ENCODE measurements at regions of chr10 and their contacts with region 1.

Region 1: GRCh38 chr10:59124187-59124586 is 52.3 kb upstream of the PHYHIPL start:
- DNase-seq: no peak
- ATAC-seq: no peak
- H3K4me3 ChIP-seq: no peak overlapping the region
- H3K27ac ChIP-seq: no peak overlapping the region
- H3K4me1 ChIP-seq: no peaks in the 10 kb centered on the region
- H3K27me3 ChIP-seq: no peaks in the 10 kb centered on the region
- CTCF ChIP-seq: no peak

Region 2: DNA sequence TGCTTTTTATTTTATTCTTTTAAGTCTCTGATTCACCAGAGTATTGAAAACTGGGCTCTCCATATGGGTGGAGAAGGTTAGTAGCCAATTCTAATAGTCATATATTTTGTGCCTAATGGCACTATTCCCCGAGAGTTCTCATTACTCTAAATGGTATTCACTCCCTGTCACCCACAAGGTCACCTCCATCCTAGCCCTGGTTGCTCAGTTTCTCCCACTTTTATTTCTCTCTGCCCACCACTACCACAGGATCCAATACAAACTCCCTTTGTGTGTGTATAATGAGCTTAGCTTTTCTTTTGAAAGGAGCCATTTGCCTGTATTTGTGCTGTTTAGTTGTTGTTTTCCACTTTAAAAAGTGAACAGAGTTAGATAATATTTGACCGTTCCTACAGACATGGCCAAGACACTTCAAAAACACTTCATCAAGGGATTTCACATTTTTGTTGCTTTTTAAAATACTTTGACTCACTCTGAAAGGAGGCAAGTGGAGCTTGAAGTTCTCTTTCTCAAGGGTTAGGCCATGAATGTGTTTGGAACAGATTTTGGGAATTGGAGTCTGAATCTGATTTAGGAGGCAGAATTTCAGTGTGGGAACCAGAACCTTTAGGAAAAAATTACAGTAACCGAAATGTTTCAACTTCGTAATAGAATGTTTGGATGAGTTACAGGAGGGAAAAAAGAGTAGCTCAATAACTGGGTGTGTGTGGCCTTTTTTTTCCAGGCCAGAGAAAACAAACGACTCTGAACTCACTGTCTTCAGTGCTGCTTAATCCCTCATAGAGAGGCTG is 290.2 kb before region 1 on chr10:
- CTCF ChIA-PET with region 1: no interaction called
- POLR2A ChIA-PET with region 1: no interaction called
- in situ Hi-C with region 1: no loop called
- intact Hi-C with region 1: no loop called
- DNase-seq: no peak
- ATAC-seq: no peak
- H3K4me3 ChIP-seq: no peak overlapping the region
- H3K27ac ChIP-seq: no peak overlapping the region
- H3K4me1 ChIP-seq: no peaks in the 10 kb centered on the region
- H3K27me3 ChIP-seq: no peaks in the 10 kb centered on the region
- CTCF ChIP-seq: no peak

Region 3: DNA sequence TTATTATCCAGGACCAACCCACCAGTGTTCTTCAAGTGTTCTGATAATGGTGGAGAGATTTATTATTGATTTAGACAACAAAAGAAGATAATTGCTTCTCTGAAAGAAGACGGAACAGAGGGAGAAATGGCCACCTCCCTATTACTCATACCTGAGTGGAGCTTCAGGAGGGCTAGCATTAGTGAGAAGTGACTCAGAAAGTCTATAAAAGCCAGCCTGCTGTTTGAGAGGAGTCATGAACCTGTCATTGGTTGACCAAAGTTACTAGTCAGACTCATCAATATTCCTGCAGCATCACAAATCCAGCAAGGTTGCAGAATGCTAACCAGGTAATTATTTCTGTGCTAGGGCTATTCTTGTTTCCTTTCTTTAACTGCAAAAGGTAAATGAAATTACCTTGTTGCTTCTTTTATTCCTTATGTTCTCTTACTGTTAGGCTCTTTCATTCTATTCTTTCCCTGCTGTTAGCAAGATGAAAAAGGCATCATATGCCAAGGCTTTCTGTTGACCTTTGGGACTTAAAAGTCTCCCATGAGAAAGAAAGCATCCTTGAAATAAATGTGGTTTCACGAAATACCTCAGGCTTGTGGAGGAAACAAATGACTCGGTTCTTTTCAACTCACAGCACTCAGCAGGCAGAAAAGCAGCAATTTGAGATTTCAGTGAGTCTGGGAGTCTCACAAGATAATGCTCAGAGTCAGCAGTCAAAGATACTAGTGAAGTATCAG is 204.1 kb before region 1 on chr10:
- CTCF ChIA-PET with region 1: no interaction called
- POLR2A ChIA-PET with region 1: no interaction called
- in situ Hi-C with region 1: no loop called
- intact Hi-C with region 1: no loop called
- DNase-seq: peak; percentile 72
- ATAC-seq: peak; percentile 93
- H3K4me3 ChIP-seq: no peak overlapping the region
- H3K27ac ChIP-seq: no peak overlapping the region
- H3K4me1 ChIP-seq: no peaks in the 10 kb centered on the region
- H3K27me3 ChIP-seq: no peaks in the 10 kb centered on the region
- CTCF ChIP-seq: no peak

Region 4: DNA sequence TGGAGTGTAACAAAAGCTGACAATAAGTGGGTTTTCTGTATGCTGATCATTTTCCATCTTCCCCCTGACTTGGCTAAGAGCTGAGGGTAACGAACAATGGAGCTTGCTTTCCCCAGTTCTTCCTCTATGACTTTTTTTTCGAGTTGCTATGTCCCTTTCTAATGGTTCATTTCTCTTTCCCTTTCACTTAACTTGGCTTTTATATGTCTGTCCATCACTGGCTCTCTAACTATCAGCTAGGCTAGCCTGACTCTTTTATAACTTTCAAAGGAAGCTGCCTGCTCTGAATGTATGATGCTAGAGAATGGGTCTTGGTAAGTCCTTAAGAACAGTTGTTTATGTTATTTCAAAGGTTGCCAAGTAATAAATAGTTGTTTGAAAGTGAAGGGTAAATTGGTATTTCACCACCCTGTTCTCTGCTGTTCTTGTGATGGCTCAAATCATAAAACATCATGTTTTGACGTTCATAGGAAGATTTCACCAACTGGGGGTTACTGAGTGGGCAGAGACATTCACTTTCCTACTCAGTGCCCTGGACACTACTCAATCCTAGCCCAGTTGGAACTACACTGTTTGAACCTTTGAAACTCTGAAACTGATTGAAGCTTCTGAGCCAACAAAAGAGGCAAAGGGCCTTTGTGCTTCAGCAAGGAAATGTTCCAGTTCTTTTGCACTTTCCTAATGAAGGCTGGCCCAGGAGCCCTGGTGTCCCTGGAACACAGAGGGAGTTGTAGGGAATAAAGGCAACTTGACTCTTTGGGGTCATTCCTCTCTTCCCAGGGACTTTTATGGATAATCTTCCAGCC is 33.2 kb before region 1 on chr10:
- CTCF ChIA-PET with region 1: interaction called, 10 read pairs
- POLR2A ChIA-PET with region 1: interaction called, 14 read pairs
- in situ Hi-C with region 1: no loop called
- intact Hi-C with region 1: no loop called
- DNase-seq: no peak
- ATAC-seq: no peak
- H3K4me3 ChIP-seq: no peak overlapping the region
- H3K27ac ChIP-seq: no peak overlapping the region
- H3K4me1 ChIP-seq: no peaks in the 10 kb centered on the region
- H3K27me3 ChIP-seq: no peaks in the 10 kb centered on the region
- CTCF ChIP-seq: no peak

Measured in Panc1 (cell line).